ENCODE measurements at regions of chr19 and their contacts with region 1.

Region 1: DNA sequence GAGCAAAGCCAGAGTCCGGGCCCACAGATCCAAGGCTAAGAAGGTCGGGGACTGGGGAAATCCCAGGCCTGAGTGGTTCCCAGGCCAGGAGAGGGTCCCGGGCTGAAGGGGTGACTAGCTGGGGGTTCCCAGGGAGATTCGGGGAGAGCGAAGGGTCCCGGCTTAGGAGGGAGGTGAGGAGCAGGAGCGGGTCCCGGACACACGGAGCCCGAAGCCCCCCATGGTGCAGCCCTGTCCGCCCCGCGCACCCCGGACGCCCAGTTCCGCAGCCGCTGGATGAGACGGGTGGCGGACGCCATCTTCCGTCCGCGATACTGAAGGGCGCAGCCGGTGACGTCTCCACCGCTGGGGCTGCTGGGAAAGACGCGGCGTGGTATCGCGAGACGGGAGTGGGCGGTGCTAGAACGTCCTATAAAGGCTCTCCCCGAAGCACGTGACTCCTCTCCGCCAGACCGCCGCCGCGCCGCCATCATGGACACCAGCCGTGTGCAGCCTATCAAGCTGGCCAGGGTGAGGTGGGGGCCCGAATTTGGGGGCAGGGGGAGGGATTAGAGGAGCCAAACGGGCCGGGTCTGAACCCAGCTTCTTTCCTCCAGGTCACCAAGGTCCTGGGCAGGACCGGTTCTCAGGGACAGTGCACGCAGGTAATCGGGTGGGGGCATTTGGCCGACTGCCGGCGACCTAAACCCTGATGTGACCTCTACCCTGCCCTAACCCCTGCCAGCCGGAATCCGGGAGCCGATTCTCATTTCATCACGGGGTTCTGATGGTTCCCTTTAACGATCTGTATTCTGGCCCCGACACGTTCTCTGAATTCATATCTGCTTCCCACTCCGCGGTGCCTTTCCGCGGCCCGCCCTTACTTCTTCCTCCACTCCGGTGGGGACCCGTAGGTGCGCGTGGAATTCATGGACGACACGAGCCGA is at the starts of genes NDUFA7 and RPS28:
- DNase-seq: peak; percentile 99
- total RNA-seq, gene NDUFA7: 94.0 TPM
- total RNA-seq, gene RPS28: 669 TPM

Region 2: DNA sequence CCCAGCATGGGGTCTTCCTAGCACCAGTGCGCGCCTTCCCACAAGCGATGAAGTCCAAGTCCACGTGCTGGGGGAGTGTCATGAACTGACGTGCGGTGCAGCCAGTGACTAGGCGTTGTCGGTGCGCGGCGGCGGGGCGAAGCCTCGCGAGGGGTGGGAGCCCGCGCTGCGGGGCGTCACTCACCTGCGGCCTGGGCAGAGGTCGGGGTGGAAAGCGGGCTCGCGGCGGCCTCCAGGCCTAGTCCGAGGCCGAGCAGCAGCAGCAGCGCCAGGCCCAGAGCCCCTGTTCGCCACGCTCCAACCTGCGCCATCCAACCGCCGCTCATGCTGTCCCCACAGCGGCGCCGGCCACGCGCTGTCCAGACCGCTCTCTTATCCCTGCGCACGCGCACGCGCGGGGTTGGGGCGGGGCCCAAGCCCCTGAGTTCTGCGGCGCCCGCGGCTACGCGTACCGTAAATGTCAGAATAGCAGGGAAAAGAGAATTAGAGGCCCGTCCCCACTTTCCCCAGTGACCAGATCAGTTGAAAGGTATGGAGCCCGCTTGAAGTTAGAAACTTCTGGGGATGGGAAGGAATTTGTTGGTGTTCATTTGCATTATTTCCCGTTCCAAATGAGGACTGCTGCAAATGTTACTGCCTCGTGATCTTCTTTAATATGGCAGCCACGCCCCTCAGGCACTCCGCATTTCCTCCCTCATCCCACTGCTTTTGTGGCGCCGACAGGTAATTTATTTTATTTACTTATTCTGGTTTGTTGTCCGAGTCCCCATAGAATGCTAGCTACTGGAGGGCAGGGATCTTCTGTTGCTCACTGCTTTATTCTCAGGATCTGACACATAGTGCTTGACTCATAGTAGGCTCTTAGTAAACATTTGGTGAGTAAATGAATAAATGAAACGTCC is 13.1 kb before region 1 on chr19 and contains the start of gene CD320:
- intact Hi-C with region 1: loop called (anchors 2 kb)
- DNase-seq: peak; percentile 94
- total RNA-seq, gene CD320: 15.8 TPM

Region 3: DNA sequence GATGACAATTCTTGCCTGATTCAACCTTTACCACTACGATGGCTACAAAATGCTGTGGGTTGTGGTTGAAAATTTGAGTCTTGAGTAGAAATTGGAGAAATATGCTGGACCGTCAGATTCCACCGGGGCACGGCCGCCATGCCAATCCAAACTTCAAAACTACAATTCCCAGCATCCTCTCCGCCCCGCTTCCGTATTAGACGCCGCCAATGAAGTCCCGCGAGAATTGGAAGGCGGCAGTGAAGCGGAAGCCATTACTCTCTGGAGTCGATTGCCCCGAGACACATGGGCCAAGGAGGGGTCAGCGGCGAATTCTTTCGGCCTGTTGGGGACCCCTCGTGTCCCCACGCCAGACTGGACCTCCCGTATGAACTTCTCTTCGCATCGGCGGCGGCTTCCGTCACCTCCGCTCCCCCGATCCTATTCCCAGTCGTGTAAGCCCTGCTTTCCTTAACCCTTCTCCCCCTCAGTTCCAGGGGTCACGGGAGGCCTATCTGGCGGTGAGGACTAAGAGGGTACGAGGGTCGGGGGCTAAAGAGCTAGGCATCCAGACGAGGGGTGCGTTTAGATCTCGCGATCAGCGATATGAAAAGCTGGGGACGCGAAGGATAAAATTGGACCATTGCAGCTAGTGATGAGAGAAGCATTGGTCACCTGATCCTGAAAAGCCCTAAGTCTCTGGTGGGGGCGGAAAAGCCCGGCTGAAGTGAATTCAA is 819.0 kb after region 1 on chr19 and contains the start of gene ZNF317:
- intact Hi-C with region 1: loop called (anchors 5 kb)
- DNase-seq: peak; percentile 96
- total RNA-seq, gene ZNF317: 13.8 TPM

Measured in cardiac septum (tissue), 1 donor.